Endothelial cell of umbilical vein (primary cell): ENCODE measurements at regions of chr6 and their contacts with region 1.

Region 1: GRCh38 chr6:133428299-133428698 is 187.1 kb downstream of the EYA4 start:
- DNase-seq: no peak
- H3K4me3 ChIP-seq: no peak overlapping the region
- H3K27ac ChIP-seq: no peak overlapping the region
- H3K4me1 ChIP-seq: no peaks in the 10 kb centered on the region
- H3K27me3 ChIP-seq: no peaks in the 10 kb centered on the region
- CTCF ChIP-seq: no peak
- POLR2A ChIP-seq: no peak

Region 2: DNA sequence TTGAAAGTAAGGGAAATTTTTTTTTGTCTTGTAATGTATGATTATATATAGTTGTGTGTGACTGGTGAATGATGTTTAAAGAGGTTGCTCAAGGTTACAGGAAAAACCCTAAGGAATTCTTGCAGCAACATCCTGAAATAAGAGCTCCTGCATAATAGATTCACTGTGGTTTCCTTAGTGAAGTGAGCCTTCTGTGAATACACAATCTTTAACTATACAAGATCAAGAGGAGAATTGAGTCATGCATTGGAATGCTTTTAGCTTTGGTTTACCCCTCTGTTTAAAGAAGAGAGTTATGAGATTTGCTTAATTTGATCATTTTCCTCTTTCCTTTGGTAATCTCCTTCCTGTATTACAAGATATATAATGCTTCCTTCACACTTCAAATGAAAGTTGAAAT is 328.7 kb before region 1 on chr6:
- CTCF ChIA-PET with region 1: no interaction called
- POLR2A ChIA-PET with region 1: no interaction called
- dilution Hi-C with region 1: no loop called
- intact Hi-C with region 1: loop called (anchors 10 kb)
- DNase-seq: peak; percentile 31
- H3K4me3 ChIP-seq: no peak overlapping the region
- H3K27ac ChIP-seq: no peak overlapping the region
- H3K4me1 ChIP-seq: no peaks in the 10 kb centered on the region
- H3K27me3 ChIP-seq: no peaks in the 10 kb centered on the region
- CTCF ChIP-seq: no peak
- POLR2A ChIP-seq: no peak

Region 3: GRCh38 chr6:134123666-134124208 is 695.4 kb after region 1 on chr6:
- CTCF ChIA-PET with region 1: no interaction called
- POLR2A ChIA-PET with region 1: no interaction called
- dilution Hi-C with region 1: no loop called
- intact Hi-C with region 1: no loop called
- DNase-seq: peak; percentile 76
- H3K4me3 ChIP-seq: no peak overlapping the region
- H3K27ac ChIP-seq: no peak overlapping the region
- H3K4me1 ChIP-seq: no peaks in the 10 kb centered on the region
- H3K27me3 ChIP-seq: no peaks in the 10 kb centered on the region
- CTCF ChIP-seq: peak; percentile 38 to 42
- POLR2A ChIP-seq: no peak